Natural killer cell (primary cell): ENCODE measurements at regions of chr18 and their contacts with region 1.

Region 1: DNA sequence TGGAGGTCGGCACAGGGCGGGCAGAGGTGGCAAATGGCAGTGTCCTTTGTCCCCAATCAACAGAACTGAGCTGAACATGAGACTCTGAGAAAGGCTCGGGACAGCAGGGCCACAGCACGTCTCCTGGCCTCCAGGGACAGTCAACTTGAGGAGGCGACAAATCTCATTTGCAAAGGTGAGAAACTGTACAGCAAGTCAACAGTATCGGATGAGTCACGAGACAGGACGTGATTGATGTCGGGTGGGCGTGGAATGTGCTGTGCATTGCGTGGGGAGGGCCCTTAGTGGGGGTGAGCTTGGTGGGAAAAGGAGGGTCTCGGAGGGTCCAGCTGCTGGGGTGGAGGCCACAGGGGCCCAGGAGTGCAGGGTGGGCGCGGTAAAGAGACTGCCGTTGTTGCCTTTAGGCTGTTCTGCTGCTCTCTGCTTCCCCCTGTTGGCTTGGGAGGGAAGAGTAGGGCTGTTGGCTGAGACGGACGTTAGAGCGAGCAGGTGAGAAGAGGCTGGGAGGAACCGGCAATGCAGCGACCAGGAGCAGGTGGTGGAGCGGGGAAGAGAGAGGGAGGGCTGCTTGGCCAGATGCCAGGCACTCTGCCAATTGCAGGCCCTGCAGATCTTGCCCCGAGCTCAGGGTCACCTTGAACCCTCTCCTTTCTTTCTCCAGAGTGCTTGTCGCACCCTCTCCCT is 164.3 kb downstream of the BCL2 start:
- DNase-seq: peak; percentile 77 to 90
- ATAC-seq: peak; percentile 87 to 93 (median 87)
- H3K4me3 ChIP-seq: peak overlapping the region; percentile 44
- H3K4me3 Mint-ChIP-seq: peak overlapping the region; percentile 82
- H3K27ac ChIP-seq: peak overlapping the region; percentile 82
- H3K27ac Mint-ChIP-seq: peak overlapping the region; percentile 95 to 96
- H3K4me1 ChIP-seq: peaks cover 74% of the 10 kb centered on the region
- H3K4me1 Mint-ChIP-seq: peaks cover 58 to 69% of the 10 kb centered on the region in 2 donors
- H3K27me3 ChIP-seq: no peaks in the 10 kb centered on the region
- H3K27me3 Mint-ChIP-seq: no peaks in the 10 kb centered on the region
- CTCF ChIP-seq: peak; percentile 92

Region 2: DNA sequence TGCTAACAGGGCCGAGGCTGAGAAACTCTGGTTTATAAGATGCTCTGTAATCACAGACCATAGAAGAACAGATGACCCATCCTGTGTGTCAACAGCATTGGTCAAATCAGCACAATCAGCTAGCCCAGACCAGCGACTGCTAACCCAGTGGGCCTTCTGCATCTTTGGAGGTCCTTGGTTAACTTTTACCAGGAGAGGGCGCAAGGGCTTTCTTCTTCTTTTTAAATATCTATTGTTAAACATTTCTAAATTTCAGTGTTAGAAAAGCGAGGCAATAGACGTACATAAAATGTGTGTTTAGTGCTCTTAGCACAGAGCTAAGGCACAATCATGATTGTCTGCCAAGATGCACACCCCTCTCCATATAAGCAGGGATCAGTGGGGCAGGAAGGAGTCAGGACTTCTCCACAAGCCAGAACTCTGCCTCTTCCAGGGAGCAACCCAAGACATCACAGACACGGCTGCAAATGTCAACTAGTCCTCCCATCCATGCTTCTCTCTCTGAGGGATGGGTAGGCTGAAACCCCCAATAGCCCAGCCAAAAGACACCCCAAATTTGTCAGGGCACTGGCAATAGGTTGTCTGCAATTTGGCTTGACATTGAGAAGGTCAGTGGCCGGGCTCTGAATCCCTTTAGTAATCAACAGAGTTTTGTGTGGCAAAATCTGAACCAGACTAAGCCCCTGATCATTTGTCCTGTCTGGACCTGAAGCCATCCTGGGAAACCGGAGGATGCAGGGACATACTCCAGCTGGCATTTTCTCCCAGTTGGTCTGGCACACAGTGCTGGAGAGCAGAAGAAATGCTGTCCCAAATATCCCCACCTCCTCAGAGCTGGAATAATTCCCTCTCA is 24.0 kb before region 1 on chr18:
- intact Hi-C with region 1: loop called (anchors 2 kb)
- DNase-seq: peak; percentile 33 to 81
- ATAC-seq: peak; percentile 62 to 90 (median 71)
- H3K4me3 ChIP-seq: no peak overlapping the region
- H3K4me3 Mint-ChIP-seq: no peak overlapping the region
- H3K27ac ChIP-seq: peak overlapping the region; percentile 4
- H3K27ac Mint-ChIP-seq: peak overlapping the region in 1 of 2 donors; percentile 60
- H3K4me1 ChIP-seq: peaks cover 6% of the 10 kb centered on the region
- H3K4me1 Mint-ChIP-seq: peaks cover 18 to 32% of the 10 kb centered on the region in 2 donors
- H3K27me3 ChIP-seq: no peaks in the 10 kb centered on the region
- H3K27me3 Mint-ChIP-seq: no peaks in the 10 kb centered on the region
- CTCF ChIP-seq: peak; percentile 79

Region 3: DNA sequence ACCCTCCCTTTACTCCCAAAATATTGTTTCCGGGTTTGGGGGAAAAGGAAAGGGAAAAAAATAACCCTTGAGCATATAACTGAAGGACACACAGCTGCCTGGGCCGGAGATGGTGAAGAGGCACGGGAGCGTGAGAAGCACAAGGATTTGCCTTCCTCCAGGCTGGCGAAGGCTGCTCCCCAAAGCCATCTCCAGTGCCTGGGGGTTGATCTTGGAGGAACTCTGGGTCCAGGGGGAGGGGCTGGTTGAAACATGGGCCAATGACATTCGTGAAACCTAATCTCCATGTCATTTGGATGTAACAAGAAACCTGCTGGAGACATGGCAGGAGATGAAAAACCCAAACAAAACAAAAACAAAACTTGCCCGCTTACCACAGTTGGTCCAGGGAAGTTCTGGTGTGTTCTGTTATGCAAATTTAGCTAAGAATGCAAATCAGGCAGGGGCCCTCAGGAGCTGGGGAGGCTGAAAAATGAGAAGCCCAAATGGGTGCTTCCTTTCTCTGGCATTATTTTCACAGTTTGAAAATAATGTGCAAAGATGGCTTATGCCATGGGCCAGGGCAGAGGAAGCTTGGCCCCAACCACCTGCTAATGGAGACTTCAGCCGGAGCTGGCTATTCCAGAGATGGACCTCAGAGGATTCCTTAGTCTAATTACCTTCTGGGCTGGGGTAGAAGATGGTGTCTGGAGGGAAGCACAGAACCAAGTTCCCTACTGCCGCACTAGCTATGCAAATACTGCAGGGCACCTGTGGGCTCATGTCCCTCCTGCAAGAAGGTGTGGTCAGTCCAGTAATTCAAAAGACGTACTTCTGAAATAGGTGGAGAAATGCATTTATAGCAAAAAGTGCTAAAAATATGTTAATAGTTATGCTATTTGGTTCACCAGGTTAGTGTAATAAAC is 16.6 kb before region 1 on chr18:
- intact Hi-C with region 1: loop called (anchors 2 kb)
- DNase-seq: no peak
- ATAC-seq: peak; percentile 5 to 26 (median 15)
- H3K4me3 ChIP-seq: peak overlapping the region; percentile 37
- H3K4me3 Mint-ChIP-seq: peak overlapping the region; percentile 84
- H3K27ac ChIP-seq: peak overlapping the region; percentile 57
- H3K27ac Mint-ChIP-seq: peak overlapping the region; percentile 77 to 90
- H3K4me1 ChIP-seq: peaks cover 43% of the 10 kb centered on the region
- H3K4me1 Mint-ChIP-seq: peaks cover 43 to 62% of the 10 kb centered on the region in 2 donors
- H3K27me3 ChIP-seq: no peaks in the 10 kb centered on the region
- H3K27me3 Mint-ChIP-seq: no peaks in the 10 kb centered on the region
- CTCF ChIP-seq: no peak

Region 4: GRCh38 chr18:63367053-63367953 is 212.0 kb after region 1 on chr18 and contains the start of gene KDSR:
- intact Hi-C with region 1: loop called (anchors 1 kb)
- DNase-seq: peak; percentile 79 to 86
- ATAC-seq: peak; percentile 83 to 91 (median 87)
- H3K4me3 ChIP-seq: peak within 1 kb of the TSS; percentile 93
- H3K4me3 Mint-ChIP-seq: peak within 1 kb of the TSS; percentile 91
- H3K27ac ChIP-seq: peak within 1 kb of the TSS; percentile 78
- H3K27ac Mint-ChIP-seq: peak within 1 kb of the TSS; percentile 50 to 69
- H3K4me1 ChIP-seq: peaks cover 30% of the 10 kb centered on the region
- H3K4me1 Mint-ChIP-seq: peaks cover 46 to 48% of the 10 kb centered on the region in 2 donors
- H3K27me3 ChIP-seq: no peaks in the 10 kb centered on the region
- H3K27me3 Mint-ChIP-seq: peaks cover 7 to 14% of the 10 kb centered on the region in 2 donors
- CTCF ChIP-seq: no peak
- total RNA-seq, gene KDSR: 11.1 to 15.1 (median 11.6) TPM